H1 (cell line): ENCODE measurements at regions of chr10 and their contacts with region 1.

Region 1: GRCh38 chr10:100710151-100710871 is 35.1 kb upstream of the PAX2 start:
- DNase-seq: peak in 1 of 2 experiments; percentile 61
- H3K4me3 ChIP-seq: peak overlapping the region; percentile 22 to 60 (median 34); a peak in 6 of 8 replicates
- H3K27ac ChIP-seq: no peak overlapping the region
- H3K4me1 ChIP-seq: peaks cover 0 to 9% (median 4%) of the 10 kb centered on the region in 4 experiments; a peak in 5 of 7 replicates
- H3K27me3 ChIP-seq: peaks cover 66 to 79% (median 76%) of the 10 kb centered on the region in 4 experiments
- CTCF ChIP-seq: no peak
- EP300 ChIP-seq: no peak
- POLR2A ChIP-seq: no peak
- RAD21 ChIP-seq: no peak

Region 2: GRCh38 chr10:100554902-100555301 is 155.4 kb before region 1 on chr10:
- CTCF ChIA-PET with region 1: no interaction called
- POLR2A ChIA-PET with region 1: no interaction called
- DNase-seq: no peak
- H3K4me3 ChIP-seq: no peak overlapping the region
- H3K27ac ChIP-seq: no peak overlapping the region
- H3K4me1 ChIP-seq: no peaks in the 10 kb centered on the region
- H3K27me3 ChIP-seq: no peaks in the 10 kb centered on the region
- CTCF ChIP-seq: no peak
- EP300 ChIP-seq: no peak
- POLR2A ChIP-seq: no peak
- RAD21 ChIP-seq: no peak

Region 3: GRCh38 chr10:100598166-100598565 is 112.1 kb before region 1 on chr10:
- CTCF ChIA-PET with region 1: no interaction called
- POLR2A ChIA-PET with region 1: no interaction called
- DNase-seq: no peak
- H3K4me3 ChIP-seq: no peak overlapping the region
- H3K27ac ChIP-seq: no peak overlapping the region
- H3K4me1 ChIP-seq: no peaks in the 10 kb centered on the region
- H3K27me3 ChIP-seq: no peaks in the 10 kb centered on the region
- CTCF ChIP-seq: no peak
- EP300 ChIP-seq: no peak
- POLR2A ChIP-seq: no peak
- RAD21 ChIP-seq: no peak

Region 4: GRCh38 chr10:100737355-100738054 is 27.2 kb after region 1 on chr10:
- CTCF ChIA-PET with region 1: interaction called, 44 read pairs
- POLR2A ChIA-PET with region 1: interaction called, 7 read pairs
- DNase-seq: peak in 1 of 2 experiments; percentile 82
- H3K4me3 ChIP-seq: peak overlapping the region in 1 of 4 experiments; percentile 37; a peak in 4 of 8 replicates
- H3K27ac ChIP-seq: no peak overlapping the region
- H3K4me1 ChIP-seq: peaks cover 0 to 30% (median 24%) of the 10 kb centered on the region in 4 experiments; a peak in 6 of 7 replicates
- H3K27me3 ChIP-seq: peaks cover 92 to 100% (median 100%) of the 10 kb centered on the region in 4 experiments
- CTCF ChIP-seq: no peak
- EP300 ChIP-seq: no peak
- POLR2A ChIP-seq: no peak
- RAD21 ChIP-seq: no peak